ENCODE measurements at regions of chr20 and their contacts with region 1.

Region 1: DNA sequence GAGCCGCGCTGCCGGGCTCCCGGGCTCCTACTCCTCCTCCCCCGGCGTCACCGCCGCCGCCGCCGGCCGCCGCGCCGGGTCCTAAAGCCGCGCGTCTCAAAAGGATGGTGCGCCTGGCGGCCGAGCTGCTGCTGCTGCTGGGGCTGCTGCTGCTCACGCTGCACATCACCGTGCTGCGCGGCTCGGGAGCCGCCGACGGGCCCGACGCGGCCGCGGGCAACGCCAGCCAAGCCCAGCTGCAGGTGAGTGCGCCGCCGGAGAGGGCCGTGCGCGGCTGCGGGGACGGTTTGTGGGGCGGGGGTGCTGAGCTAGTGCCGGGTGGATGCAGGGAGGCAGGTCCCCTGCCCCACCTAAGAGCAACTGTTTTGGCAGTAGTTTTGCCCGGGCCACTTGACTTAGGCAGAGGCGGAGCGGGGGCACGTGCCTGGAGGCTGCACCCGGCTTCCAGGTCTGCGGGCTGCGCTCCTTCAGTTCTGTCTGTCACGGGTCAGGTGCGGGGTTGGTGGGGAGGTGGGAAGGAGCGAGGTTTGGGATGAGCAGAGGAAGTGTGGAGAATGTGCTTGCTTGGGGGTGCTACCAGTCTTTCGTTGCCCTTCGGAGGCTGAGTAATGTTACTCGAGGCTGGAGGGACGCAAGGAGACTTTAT is 722 bp downstream of the ISM1 start:
- DNase-seq: peak; percentile 82
- ATAC-seq: peak; percentile 87
- H3K4me3 Mint-ChIP-seq: peak overlapping the region; percentile 74
- H3K27ac Mint-ChIP-seq: peak overlapping the region; percentile 37
- H3K4me1 Mint-ChIP-seq: peaks cover 17% of the 10 kb centered on the region
- H3K27me3 Mint-ChIP-seq: peaks cover 36% of the 10 kb centered on the region

Region 2: GRCh38 chr20:11890331-11891080 is 1331.3 kb before region 1 on chr20:
- CTCF ChIA-PET with region 1: no interaction called
- POLR2A ChIA-PET with region 1: no interaction called
- intact Hi-C with region 1: loop called in 1 of 2 experiments (anchors 10 kb)
- DNase-seq: peak; percentile 86
- ATAC-seq: peak; percentile 77
- H3K4me3 Mint-ChIP-seq: peak overlapping the region; percentile 76
- H3K27ac Mint-ChIP-seq: peak overlapping the region; percentile 51
- H3K4me1 Mint-ChIP-seq: peaks cover 13% of the 10 kb centered on the region
- H3K27me3 Mint-ChIP-seq: peaks cover 12% of the 10 kb centered on the region

Region 3: GRCh38 chr20:12838261-12838866 is 383.4 kb before region 1 on chr20:
- CTCF ChIA-PET with region 1: no interaction called
- POLR2A ChIA-PET with region 1: no interaction called
- intact Hi-C with region 1: no loop called
- DNase-seq: peak; percentile 12
- ATAC-seq: no peak
- H3K4me3 Mint-ChIP-seq: no peak overlapping the region
- H3K27ac Mint-ChIP-seq: no peak overlapping the region
- H3K4me1 Mint-ChIP-seq: no peaks in the 10 kb centered on the region
- H3K27me3 Mint-ChIP-seq: peaks cover 2% of the 10 kb centered on the region

Region 4: DNA sequence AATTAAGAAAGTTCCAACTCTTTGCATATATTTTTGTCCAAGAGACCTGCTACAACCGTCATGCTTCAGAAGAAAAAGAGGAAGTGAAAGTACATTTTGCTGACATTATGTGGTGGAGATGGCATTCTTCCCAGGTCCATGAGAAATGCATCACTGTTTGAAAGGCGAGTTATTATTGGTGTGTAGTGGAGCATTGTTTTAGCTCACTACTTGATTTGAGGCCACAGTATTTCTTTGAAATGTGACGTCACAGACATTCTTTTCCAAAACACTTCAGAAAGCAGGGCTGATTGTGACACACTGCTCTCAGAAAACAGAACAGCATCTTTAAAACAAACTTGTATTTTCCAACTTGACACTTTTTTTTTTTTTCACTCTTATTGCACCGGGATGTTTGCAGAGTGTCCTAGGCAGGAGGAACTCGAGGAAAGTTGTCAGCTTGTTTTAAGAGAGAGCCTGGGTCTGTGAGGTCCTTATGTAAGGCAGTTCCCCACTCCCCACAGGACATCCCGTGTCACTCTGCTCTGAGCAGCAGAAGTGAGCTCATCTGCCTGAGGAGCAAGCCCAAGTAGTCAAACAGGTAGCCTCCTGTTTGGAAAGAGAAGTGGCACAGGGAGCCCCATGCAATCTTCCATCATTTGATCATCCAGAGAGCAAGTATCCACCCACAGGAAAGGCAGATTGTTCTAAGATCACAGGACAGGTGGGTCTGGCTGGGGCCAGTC is 212.0 kb before region 1 on chr20:
- CTCF ChIA-PET with region 1: no interaction called
- POLR2A ChIA-PET with region 1: no interaction called
- intact Hi-C with region 1: loop called in 1 of 2 experiments (anchors 5 kb)
- DNase-seq: peak; percentile 22
- ATAC-seq: peak; percentile 76
- H3K4me3 Mint-ChIP-seq: peak overlapping the region; percentile 70
- H3K27ac Mint-ChIP-seq: peak overlapping the region; percentile 80
- H3K4me1 Mint-ChIP-seq: peaks cover 42% of the 10 kb centered on the region
- H3K27me3 Mint-ChIP-seq: no peaks in the 10 kb centered on the region